ENCODE measurements at regions of chr3 and their contacts with region 1.

Region 1: GRCh38 chr3:45986303-45986982 is 9.2 kb downstream of the FYCO1 start:
- DNase-seq: peak; percentile 93
- ATAC-seq: peak; percentile 97
- H3K4me3 ChIP-seq: peak overlapping the region; percentile 5; the same call in 1 of the 2 replicates
- H3K27ac ChIP-seq: peak overlapping the region; percentile 90
- H3K4me1 ChIP-seq: peaks cover 61% of the 10 kb centered on the region
- H3K27me3 ChIP-seq: no peaks in the 10 kb centered on the region
- CTCF ChIP-seq: no peak

Region 2: DNA sequence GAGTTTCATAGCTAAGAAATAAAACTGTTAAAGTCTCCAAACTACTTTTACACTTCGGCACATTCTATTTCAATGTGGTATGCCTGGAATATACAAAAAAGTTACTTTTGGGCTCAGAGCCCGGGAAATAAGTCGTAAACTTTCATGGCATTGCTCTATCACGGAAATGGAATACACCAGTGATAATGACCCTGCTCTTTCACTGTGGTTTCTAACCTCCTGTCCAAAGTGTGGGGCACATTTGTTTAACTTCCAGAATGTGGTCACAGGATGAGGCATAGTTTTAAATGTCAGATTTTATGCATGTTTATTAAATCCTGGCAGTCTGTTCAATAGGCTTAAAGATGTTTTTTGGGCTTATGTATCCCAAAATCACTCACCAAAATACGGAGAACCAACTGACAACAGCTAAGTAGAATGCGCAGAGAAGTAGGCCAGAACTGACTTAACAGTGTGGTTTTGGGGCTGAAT is 38.1 kb before region 1 on chr3:
- CTCF ChIA-PET with region 1: no interaction called
- POLR2A ChIA-PET with region 1: no interaction called
- intact Hi-C with region 1: loop called (anchors 5 kb)
- DNase-seq: peak; percentile 11
- ATAC-seq: peak; percentile 89
- H3K4me3 ChIP-seq: no peak overlapping the region
- H3K27ac ChIP-seq: no peak overlapping the region
- H3K4me1 ChIP-seq: peaks cover 14% of the 10 kb centered on the region
- H3K27me3 ChIP-seq: no peaks in the 10 kb centered on the region
- CTCF ChIP-seq: no peak

Region 3: DNA sequence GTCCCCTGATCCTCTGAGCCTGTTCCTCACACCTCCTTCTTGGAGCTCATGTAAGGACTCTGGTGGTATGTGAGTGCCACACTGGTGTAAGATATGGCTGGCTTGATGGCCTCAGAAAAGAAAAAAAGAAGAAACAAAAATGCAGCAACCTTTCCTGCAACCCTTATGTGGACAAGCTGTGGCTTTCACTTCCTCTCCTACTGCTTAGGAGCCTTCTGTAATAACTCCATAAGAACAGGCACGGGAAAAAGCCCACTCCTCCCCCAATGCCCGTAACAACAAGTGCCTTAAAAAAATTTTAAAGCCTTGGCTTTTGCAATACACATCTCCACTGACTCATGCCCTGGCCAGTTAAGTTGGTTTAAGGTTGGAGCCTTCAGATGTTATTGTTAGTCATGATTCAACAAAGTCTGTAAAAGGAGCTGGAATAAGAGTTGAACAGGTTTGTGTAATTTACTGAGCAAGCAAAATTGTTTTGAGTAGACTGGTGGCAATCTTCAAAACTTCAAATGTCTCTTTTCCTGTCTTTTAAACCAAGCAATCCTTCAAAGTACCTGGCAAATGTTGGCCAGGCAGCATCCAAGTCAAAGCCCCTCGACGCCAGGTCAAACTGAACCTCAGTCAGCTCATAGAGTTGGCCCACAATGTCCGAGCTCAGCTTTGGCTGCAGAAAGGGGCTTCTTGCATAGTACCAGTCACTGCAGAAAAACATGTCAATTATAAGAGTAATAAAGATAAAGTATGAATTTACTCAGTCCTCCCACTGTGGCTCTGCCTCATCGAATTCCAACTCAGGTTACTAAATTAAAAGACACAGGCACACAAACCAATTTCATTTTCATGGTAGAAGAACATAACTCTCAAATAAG is 13.7 kb before region 1 on chr3:
- CTCF ChIA-PET with region 1: no interaction called
- POLR2A ChIA-PET with region 1: no interaction called
- intact Hi-C with region 1: loop called (anchors 1 kb)
- DNase-seq: peak; percentile 94
- ATAC-seq: peak; percentile 98
- H3K4me3 ChIP-seq: peak overlapping the region; percentile 30; the same call in 1 of the 2 replicates
- H3K27ac ChIP-seq: peak overlapping the region; percentile 53
- H3K4me1 ChIP-seq: peaks cover 24% of the 10 kb centered on the region
- H3K27me3 ChIP-seq: no peaks in the 10 kb centered on the region
- CTCF ChIP-seq: no peak

Region 4: DNA sequence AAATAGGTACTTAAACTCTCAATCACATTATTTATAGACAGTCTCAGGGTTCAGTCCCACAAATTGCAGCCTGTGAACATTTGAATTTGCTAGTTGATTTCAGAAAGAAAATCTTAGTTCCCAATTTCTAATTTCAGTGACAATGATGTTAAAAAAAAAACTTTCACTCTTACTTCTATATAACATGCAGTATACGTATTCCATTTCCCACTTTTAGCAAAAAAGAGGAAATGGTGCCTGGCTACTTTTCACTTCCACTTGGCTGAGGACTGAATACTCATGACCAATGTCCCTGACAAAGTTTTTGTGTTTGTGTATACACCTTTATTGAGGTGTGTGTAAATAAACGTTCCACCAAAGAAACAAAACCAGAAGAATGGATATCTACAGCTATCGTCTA is 73.0 kb after region 1 on chr3:
- CTCF ChIA-PET with region 1: no interaction called
- POLR2A ChIA-PET with region 1: no interaction called
- intact Hi-C with region 1: loop called (anchors 5 kb)
- DNase-seq: no peak
- ATAC-seq: no peak
- H3K4me3 ChIP-seq: no peak overlapping the region
- H3K27ac ChIP-seq: no peak overlapping the region
- H3K4me1 ChIP-seq: peaks cover 11% of the 10 kb centered on the region
- H3K27me3 ChIP-seq: no peaks in the 10 kb centered on the region
- CTCF ChIP-seq: no peak